Prostate gland (tissue), 2 donors: ENCODE measurements at regions of chr4 and their contacts with region 1.

Region 1: GRCh38 chr4:26484032-26484515 is 6.2 kb downstream of the CCKAR start:
- DNase-seq: no peak
- H3K4me3 ChIP-seq: no peak overlapping the region
- H3K27ac ChIP-seq: no peak overlapping the region
- H3K4me1 ChIP-seq: no peaks in the 10 kb centered on the region
- H3K27me3 ChIP-seq: no peaks in the 10 kb centered on the region
- CTCF ChIP-seq: no peak
- POLR2A ChIP-seq: no peak

Region 2: DNA sequence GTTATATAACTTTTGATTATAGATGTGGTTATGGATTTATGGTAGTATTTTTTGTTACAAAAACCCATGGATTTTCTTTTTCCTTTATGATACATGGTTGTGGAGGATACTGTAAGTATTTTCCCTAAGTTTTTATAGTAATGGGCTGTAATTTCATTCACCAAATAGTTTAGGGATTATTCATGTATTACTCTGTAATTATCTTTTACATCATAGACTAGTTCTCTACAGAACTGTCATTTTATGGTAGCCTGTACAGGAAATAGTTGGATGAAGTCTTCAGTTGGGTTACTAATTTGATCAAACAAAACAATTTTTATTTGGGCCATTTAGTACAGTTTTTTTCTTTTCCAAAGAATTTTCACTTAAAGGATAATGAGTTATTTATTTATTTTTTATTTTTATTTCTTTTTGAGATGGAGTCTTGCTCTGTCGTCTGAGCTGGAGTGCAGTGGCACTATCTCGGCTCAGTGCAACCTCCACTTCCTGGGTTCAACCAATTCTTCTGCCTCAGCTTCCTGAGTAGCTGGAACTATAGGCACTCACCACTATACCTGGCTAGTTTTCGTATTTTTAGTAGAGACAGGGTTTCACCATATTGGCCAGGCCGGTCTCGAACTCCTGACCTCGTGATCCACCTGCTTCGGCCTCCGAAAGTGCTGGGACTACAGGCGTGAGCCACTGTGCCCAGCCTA is 121.2 kb before region 1 on chr4:
- intact Hi-C with region 1: no loop called
- DNase-seq: no peak
- H3K4me3 ChIP-seq: no peak overlapping the region
- H3K27ac ChIP-seq: no peak overlapping the region
- H3K4me1 ChIP-seq: no peaks in the 10 kb centered on the region
- H3K27me3 ChIP-seq: no peaks in the 10 kb centered on the region
- CTCF ChIP-seq: no peak
- POLR2A ChIP-seq: no peak

Region 3: GRCh38 chr4:26576231-26576739 is 92.2 kb after region 1 on chr4:
- intact Hi-C with region 1: loop called (anchors 10 kb)
- DNase-seq: no peak
- H3K4me3 ChIP-seq: no peak overlapping the region
- H3K27ac ChIP-seq: no peak overlapping the region
- H3K4me1 ChIP-seq: no peaks in the 10 kb centered on the region
- H3K27me3 ChIP-seq: no peaks in the 10 kb centered on the region
- CTCF ChIP-seq: no peak
- POLR2A ChIP-seq: no peak

Region 4: DNA sequence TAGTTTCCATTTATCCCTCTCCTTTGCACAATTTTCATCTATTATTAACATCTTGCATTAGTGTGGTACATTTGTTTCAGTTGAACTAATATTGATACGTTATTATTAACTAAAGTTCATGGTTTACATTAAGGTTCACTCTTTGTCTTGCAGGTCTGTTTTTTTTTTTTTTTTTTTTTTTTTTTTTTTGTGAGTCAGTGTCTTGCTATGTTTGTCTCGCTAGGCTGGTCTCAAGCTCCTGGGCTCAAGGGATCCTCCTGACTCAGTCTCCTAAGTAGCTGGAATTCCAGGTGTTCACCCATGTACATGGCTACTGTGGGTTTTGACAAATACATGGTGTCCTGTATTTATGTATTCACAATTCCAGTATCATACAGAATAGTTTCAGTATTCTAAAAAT is 106.6 kb after region 1 on chr4:
- intact Hi-C with region 1: no loop called
- DNase-seq: no peak
- H3K4me3 ChIP-seq: no peak overlapping the region
- H3K27ac ChIP-seq: no peak overlapping the region
- H3K4me1 ChIP-seq: no peaks in the 10 kb centered on the region
- H3K27me3 ChIP-seq: no peaks in the 10 kb centered on the region
- CTCF ChIP-seq: no peak
- POLR2A ChIP-seq: no peak